Naive thymus-derived CD8-positive, alpha-beta T cell (primary cell): ENCODE measurements at regions of chr6 and their contacts with region 1.

Region 1: GRCh38 chr6:42928986-42929820 is at the start of gene CNPY3:
- DNase-seq: peak; percentile 87 to 97 (median 94)
- ATAC-seq: peak; percentile 82
- H3K4me3 Mint-ChIP-seq: peak within 1 kb of the TSS; percentile 92 to 100 (median 96)
- H3K27ac Mint-ChIP-seq: peak within 1 kb of the TSS; percentile 97 to 100 (median 99)
- H3K4me1 Mint-ChIP-seq: peaks cover 32 to 59% (median 55%) of the 10 kb centered on the region in 4 donors
- H3K27me3 Mint-ChIP-seq: no peaks in the 10 kb centered on the region
- polyA plus RNA-seq, gene CNPY3: 90.3 to 158 (median 124) TPM

Region 2: DNA sequence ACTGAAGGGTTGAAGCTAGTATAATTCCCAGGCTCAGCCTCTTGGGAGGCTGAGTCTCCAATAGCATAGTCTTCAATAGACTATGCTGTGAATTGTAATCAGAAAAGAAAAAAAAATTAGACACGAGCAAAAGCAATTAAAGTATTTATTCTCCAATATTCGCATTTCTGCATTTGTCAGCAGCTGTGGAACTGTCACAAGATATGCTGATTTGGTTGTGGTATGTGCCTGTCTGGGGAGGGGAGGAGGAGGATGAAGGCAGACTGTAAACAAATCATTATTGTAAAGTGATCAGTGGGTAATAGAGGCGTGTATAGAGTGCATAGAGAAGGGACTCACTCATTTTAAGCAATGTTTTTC is 157.5 kb before region 1 on chr6:
- POLR2A ChIA-PET with region 1: interaction called, 12 read pairs
- DNase-seq: peak in 2 of 10 donors; percentile 63 to 66
- ATAC-seq: peak; percentile 20 to 50
- H3K4me3 Mint-ChIP-seq: peak overlapping the region; percentile 65 to 91 (median 84)
- H3K27ac Mint-ChIP-seq: peak overlapping the region; percentile 98 to 100 (median 100)
- H3K4me1 Mint-ChIP-seq: peaks cover 38 to 82% (median 77%) of the 10 kb centered on the region in 4 donors
- H3K27me3 Mint-ChIP-seq: no peaks in the 10 kb centered on the region

Region 3: DNA sequence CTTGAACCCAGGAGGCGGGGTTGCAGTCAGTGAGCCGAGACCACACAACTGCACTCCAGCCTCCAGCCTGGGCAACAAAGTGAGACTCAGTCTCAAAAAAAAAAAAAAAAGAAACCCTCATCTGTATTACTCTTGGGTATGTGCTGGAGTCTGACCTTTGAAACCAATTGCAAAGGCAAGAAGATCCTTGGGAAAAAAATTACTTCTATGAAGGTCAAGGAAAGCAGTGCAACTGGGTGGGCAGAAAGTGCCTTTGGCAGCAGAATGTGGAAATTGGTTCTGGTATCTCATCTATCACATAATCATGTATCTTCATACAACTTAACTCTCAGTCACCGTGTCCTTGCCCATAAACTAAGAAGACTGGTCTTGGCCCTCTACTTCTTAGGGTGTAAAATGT is 57.5 kb before region 1 on chr6:
- POLR2A ChIA-PET with region 1: no interaction called
- DNase-seq: no peak
- ATAC-seq: no peak
- H3K4me3 Mint-ChIP-seq: no peak overlapping the region
- H3K27ac Mint-ChIP-seq: peak overlapping the region in 4 of 10 donors; percentile 14 to 73 (median 42)
- H3K4me1 Mint-ChIP-seq: peaks cover 0 to 2% (median 0%) of the 10 kb centered on the region in 4 donors
- H3K27me3 Mint-ChIP-seq: no peaks in the 10 kb centered on the region

Region 4: GRCh38 chr6:42890311-42891198 is 38.6 kb before region 1 on chr6:
- POLR2A ChIA-PET with region 1: interaction called, 10 read pairs
- DNase-seq: peak; percentile 69 to 94 (median 85)
- ATAC-seq: peak; percentile 87 to 94
- H3K4me3 Mint-ChIP-seq: peak overlapping the region; percentile 92 to 99 (median 98)
- H3K27ac Mint-ChIP-seq: peak overlapping the region; percentile 92 to 98 (median 96)
- H3K4me1 Mint-ChIP-seq: peaks cover 7 to 37% (median 19%) of the 10 kb centered on the region in 4 donors
- H3K27me3 Mint-ChIP-seq: no peaks in the 10 kb centered on the region

Region 5: GRCh38 chr6:42984001-42984923 is 55.1 kb after region 1 on chr6 and contains the start of gene PPP2R5D:
- POLR2A ChIA-PET with region 1: interaction called, 144 read pairs
- DNase-seq: peak; percentile 86 to 99 (median 97)
- ATAC-seq: peak; percentile 93
- H3K4me3 Mint-ChIP-seq: peak within 1 kb of the TSS; percentile 91 to 99 (median 94)
- H3K27ac Mint-ChIP-seq: peak within 1 kb of the TSS; percentile 96 to 99 (median 97)
- H3K4me1 Mint-ChIP-seq: peaks cover 40 to 66% (median 62%) of the 10 kb centered on the region in 4 donors
- H3K27me3 Mint-ChIP-seq: no peaks in the 10 kb centered on the region
- polyA plus RNA-seq, gene PPP2R5D: 11.6 to 29.8 (median 17.6) TPM

Region 6: GRCh38 chr6:43021270-43022047 is 92.3 kb after region 1 on chr6 and contains the start of gene RRP36:
- POLR2A ChIA-PET with region 1: interaction called, 109 read pairs
- DNase-seq: peak; percentile 39 to 76 (median 58)
- ATAC-seq: peak; percentile 83 to 88
- H3K4me3 Mint-ChIP-seq: peak within 1 kb of the TSS; percentile 95 to 99 (median 98)
- H3K27ac Mint-ChIP-seq: peak within 1 kb of the TSS; percentile 68 to 97 (median 93)
- H3K4me1 Mint-ChIP-seq: peaks cover 34 to 50% (median 48%) of the 10 kb centered on the region in 4 donors
- H3K27me3 Mint-ChIP-seq: no peaks in the 10 kb centered on the region
- polyA plus RNA-seq, gene RRP36: 52.7 to 74.5 (median 57.8) TPM

Region 7: DNA sequence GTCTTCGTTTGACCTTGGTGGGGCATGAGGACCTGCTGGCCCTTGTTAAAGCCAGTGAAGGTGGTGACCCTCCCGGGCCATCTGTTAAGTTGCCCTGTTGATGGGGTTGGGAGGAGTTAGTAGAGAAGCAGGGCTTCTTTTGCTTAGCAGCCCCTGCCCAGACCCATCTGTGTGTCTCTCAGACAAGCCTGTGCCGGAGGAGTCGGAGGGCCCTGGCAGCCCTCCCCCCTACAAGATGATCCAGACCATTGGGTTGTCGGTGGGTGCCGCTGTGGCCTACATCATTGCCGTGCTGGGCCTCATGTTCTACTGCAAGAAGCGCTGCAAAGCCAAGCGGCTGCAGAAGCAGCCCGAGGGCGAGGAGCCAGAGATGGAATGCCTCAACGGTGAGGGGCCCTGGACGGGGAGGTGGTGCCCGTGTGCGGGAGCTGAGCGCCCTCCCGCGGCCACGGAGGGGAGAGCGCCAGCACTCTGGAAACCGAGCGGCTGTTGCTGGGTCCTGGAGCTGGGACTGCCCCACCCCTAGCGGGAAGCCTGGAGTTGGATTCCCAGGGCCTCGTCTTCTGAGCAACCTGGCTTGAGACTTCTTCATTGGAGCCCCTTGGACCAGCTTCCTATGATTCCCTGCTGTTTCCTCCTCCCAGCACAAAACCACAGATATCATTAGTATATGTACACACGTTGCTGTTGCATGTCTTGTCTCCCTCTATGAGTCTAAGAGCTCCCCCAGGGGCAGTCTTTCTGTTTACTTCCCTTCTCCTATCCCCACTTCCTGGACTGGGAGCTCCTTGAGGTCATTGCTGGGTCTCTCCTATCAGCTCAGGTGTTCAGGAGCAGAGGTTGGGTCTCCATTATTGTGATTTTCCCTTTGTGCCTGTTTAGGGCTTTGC is 214.3 kb after region 1 on chr6:
- POLR2A ChIA-PET with region 1: interaction called, 34 read pairs
- DNase-seq: peak; percentile 72 to 89 (median 82)
- ATAC-seq: peak; percentile 73 to 80
- H3K4me3 Mint-ChIP-seq: peak overlapping the region; percentile 14 to 94 (median 89)
- H3K27ac Mint-ChIP-seq: peak overlapping the region; percentile 52 to 100 (median 99)
- H3K4me1 Mint-ChIP-seq: peaks cover 16 to 40% (median 31%) of the 10 kb centered on the region in 4 donors
- H3K27me3 Mint-ChIP-seq: no peaks in the 10 kb centered on the region